Caco-2 (cell line): ENCODE measurements at regions of chr2 and their contacts with region 1.

Region 1: DNA sequence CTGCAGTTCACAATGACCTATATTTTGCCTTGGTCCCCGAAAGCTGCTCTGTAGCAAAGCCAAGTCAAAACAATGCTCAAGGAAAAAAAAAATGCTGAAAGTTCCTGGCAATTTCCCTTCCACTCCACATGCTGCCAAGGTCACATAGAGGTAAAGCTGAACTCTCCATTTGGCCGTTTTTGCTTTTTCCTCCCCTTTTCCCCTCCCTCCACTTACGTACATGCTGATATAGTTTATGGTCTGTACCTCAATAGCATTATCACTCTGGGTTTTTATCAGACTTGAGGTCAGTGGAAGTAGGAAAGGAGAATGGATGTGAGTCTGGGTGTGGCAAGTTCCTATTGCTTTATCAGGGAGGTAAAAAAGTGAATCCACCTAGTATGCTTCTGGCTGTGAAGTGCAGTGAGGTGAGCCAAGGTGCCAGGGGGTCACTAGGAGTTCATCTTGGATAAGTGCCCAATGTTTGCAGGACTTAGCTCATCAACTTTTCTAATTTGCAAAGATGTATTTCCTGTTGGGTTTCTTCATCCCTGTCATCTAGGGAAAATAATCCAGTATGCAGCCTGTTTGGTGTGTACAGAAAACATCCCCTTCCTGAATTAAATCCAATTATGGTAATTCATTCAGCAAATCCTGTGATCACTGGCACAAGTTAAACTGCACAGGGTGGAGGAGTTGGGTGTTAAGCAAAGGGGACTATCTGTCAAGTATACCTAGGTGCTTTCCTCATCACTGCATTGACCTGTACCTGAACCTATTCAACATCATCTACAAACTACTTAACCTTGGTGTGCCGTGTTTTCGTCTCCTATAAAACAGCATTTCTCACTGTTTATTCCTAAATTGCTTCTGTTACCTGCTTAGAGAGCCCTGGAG is 124.3 kb upstream of the CYP26B1 start:
- DNase-seq: no peak
- H3K4me3 ChIP-seq: no peak overlapping the region
- H3K4me3 Mint-ChIP-seq: no peak overlapping the region
- H3K27ac Mint-ChIP-seq: no peak overlapping the region
- H3K4me1 ChIP-seq: peaks cover 11% of the 10 kb centered on the region
- H3K4me1 Mint-ChIP-seq: peaks cover 18% of the 10 kb centered on the region
- H3K27me3 ChIP-seq: no peaks in the 10 kb centered on the region
- H3K27me3 Mint-ChIP-seq: no peaks in the 10 kb centered on the region
- CTCF ChIP-seq: no peak

Region 2: GRCh38 chr2:72538486-72538885 is 266.5 kb after region 1 on chr2:
- CTCF ChIA-PET with region 1: no interaction called
- POLR2A ChIA-PET with region 1: interaction called, 10 read pairs
- intact Hi-C with region 1: no loop called
- DNase-seq: no peak
- H3K4me3 ChIP-seq: no peak overlapping the region
- H3K4me3 Mint-ChIP-seq: no peak overlapping the region
- H3K27ac Mint-ChIP-seq: no peak overlapping the region
- H3K4me1 ChIP-seq: peaks cover 11% of the 10 kb centered on the region
- H3K4me1 Mint-ChIP-seq: peaks cover 12% of the 10 kb centered on the region
- H3K27me3 ChIP-seq: no peaks in the 10 kb centered on the region
- H3K27me3 Mint-ChIP-seq: no peaks in the 10 kb centered on the region
- CTCF ChIP-seq: no peak